Right lobe of liver (tissue), 6 donors: ENCODE measurements at regions of chr9 and their contacts with region 1.

Region 1: GRCh38 chr9:137406876-137407589 is 15.9 kb downstream of the EXD3 start:
- DNase-seq: peak; percentile 65 to 78 (median 69)
- ATAC-seq: peak; percentile 86 to 94 (median 90)
- H3K4me3 ChIP-seq: peak overlapping the region; percentile 25 to 48 (median 31)
- H3K27ac ChIP-seq: no peak overlapping the region
- H3K4me1 ChIP-seq: peaks cover 0 to 12% (median 5%) of the 10 kb centered on the region in 4 donors
- H3K27me3 ChIP-seq: no peaks in the 10 kb centered on the region
- CTCF ChIP-seq: peak; percentile 75 to 86 (median 83)
- POLR2A ChIP-seq: no peak

Region 2: DNA sequence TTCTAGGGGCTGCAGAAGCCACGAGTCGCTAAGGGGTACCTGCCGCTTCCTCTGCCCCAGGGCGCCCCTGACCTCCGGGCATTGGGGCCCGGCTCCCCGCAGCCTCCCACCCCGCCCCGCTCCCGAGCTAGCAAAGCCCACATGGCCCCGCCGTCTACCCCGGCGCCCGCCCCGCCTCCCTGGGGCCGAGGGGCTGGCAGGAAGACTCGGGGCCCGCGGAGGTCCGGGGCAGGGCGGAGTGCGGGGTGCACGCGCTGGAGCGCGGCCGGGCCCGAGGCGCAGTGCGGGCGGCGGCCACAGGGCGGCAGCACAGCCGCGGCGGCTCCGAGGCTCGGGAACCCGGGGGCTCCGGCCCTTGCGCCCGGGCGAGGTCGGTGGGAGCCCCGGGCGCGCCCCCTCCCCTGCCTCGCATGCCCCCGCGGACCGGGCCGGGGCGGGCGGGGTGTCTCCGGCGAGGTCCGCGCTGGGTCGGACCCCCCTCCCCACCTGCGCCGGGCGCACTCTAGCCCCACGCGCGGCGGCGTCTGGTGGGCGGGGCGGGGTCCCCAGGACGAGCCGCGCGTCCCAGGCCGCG is 111.7 kb before region 1 on chr9:
- intact Hi-C with region 1: loop called (anchors 5 to 10 kb)
- DNase-seq: no peak
- ATAC-seq: peak; percentile 35 to 77 (median 54)
- H3K4me3 ChIP-seq: peak overlapping the region in 1 of 3 donors; percentile 39
- H3K27ac ChIP-seq: peak overlapping the region in 2 of 3 donors; percentile 66 to 90
- H3K4me1 ChIP-seq: peaks cover 0 to 13% (median under 1%) of the 10 kb centered on the region in 4 donors
- H3K27me3 ChIP-seq: peaks cover 0 to 19% of the 10 kb centered on the region in 2 donors
- CTCF ChIP-seq: peak; percentile 35 to 84 (median 63)
- POLR2A ChIP-seq: no peak

Region 3: GRCh38 chr9:137302176-137302994 is 104.6 kb before region 1 on chr9 and contains the start of gene NRARP:
- intact Hi-C with region 1: loop called (anchors 5 to 10 kb)
- DNase-seq: peak; percentile 80 to 92 (median 86)
- ATAC-seq: peak; percentile 53 to 69 (median 55)
- H3K4me3 ChIP-seq: peak within 1 kb of the TSS; percentile 31 to 44 (median 39)
- H3K27ac ChIP-seq: peak within 1 kb of the TSS; percentile 26 to 78 (median 47)
- H3K4me1 ChIP-seq: peaks cover 0 to 20% (median under 1%) of the 10 kb centered on the region in 4 donors
- H3K27me3 ChIP-seq: peaks cover 0 to 20% of the 10 kb centered on the region in 2 donors
- CTCF ChIP-seq: peak in 3 of 4 donors; percentile 23 to 45 (median 40)
- POLR2A ChIP-seq: peak; percentile 46
- total RNA-seq, gene NRARP: 0.57 to 2.3 (median 0.98) TPM

Region 4: GRCh38 chr9:137492464-137493162 is 85.6 kb after region 1 on chr9:
- intact Hi-C with region 1: no loop called
- DNase-seq: no peak
- ATAC-seq: peak in 2 of 4 donors; percentile 16 to 24
- H3K4me3 ChIP-seq: no peak overlapping the region
- H3K27ac ChIP-seq: no peak overlapping the region
- H3K4me1 ChIP-seq: no peaks in the 10 kb centered on the region
- H3K27me3 ChIP-seq: no peaks in the 10 kb centered on the region
- CTCF ChIP-seq: no peak
- POLR2A ChIP-seq: no peak